B cell (primary cell): ENCODE measurements at regions of chrX and their contacts with region 1.

Region 1: DNA sequence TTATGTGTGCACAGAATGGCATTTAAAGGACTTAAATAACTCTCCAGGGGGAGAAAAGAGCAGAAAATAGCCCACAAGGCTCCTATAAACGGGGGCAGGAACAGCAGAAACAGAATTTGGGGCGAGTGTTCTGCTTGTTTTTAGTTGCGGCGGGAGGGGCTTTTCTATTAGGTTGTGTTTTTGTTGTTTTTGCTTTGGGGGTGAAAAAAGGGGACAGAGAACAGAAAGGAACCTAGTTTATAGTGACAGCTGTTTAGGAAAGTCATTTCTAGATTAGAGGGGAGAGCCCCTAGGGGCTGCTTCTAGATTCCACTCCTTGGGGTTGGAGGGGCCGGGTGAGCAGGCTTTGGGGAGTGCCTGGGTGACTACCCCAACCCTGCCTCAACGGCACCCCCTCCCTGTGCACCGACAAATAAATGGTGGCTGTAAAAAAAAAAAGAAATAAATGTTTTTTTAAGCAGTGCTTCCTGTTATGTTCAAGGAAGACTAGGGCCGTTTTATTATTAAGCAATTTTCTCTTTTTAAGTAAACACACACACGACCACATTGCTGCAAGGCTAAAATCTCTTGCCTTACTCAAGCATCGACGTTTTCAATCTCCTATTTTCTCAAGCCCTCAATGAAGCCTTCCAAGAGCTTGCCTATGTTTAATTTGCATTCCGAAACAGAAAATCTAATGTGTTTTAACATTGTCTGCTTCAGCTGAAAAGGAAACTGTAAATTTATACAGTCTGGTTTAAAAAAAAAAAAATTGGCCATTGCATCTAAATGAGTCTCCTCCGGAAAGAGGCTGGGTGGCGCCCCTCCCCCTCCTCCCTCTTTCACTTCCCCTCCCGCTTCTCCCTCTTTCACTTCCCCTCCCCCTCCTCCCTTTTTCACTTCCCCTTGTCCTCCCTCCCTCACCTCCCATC is 123.3 kb upstream of the TBL1X start:
- DNase-seq: peak; percentile 90
- ATAC-seq: peak; percentile 61
- H3K4me3 ChIP-seq: peak overlapping the region; percentile 30 to 71 (median 47)
- H3K4me3 Mint-ChIP-seq: peak overlapping the region; percentile 84
- H3K27ac ChIP-seq: peak overlapping the region; percentile 83 to 93
- H3K27ac Mint-ChIP-seq: peak overlapping the region; percentile 92
- H3K4me1 ChIP-seq: peaks cover 29 to 33% of the 10 kb centered on the region in 2 donors
- H3K4me1 Mint-ChIP-seq: peaks cover 30% of the 10 kb centered on the region
- H3K27me3 ChIP-seq: no peaks in the 10 kb centered on the region
- H3K27me3 Mint-ChIP-seq: no peaks in the 10 kb centered on the region
- CTCF ChIP-seq: no peak

Region 2: DNA sequence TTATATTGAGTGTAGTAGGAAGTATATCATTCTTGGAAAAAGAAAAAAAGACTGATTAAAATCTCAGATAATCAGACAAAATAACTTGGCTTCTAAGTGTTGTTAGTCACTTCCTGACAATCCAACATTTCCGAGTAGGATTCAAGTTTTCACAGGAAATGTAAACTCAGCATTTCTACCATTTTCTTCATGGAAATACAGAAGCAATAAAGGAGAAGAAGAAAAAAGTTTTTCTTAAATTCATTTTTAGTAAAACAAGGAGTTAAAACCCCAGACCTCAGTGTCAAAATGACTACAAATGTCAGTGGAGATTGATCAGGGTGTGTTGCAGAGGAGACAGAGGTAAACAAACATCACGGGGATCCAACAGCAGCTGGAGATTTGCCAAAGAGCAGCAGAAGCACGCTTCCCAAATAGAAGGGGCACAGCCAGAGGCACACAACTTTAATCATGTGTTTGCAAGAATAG is 178.3 kb before region 1 on chrX:
- CTCF ChIA-PET with region 1: interaction called, 3 read pairs
- POLR2A ChIA-PET with region 1: no interaction called
- intact Hi-C with region 1: loop called (anchors 1 kb)
- DNase-seq: no peak
- ATAC-seq: no peak
- H3K4me3 ChIP-seq: no peak overlapping the region
- H3K4me3 Mint-ChIP-seq: no peak overlapping the region
- H3K27ac ChIP-seq: no peak overlapping the region
- H3K27ac Mint-ChIP-seq: no peak overlapping the region
- H3K4me1 ChIP-seq: peaks cover 5 to 15% of the 10 kb centered on the region in 2 donors
- H3K4me1 Mint-ChIP-seq: peaks cover 26% of the 10 kb centered on the region
- H3K27me3 ChIP-seq: peaks cover 0 to 23% (median 9%) of the 10 kb centered on the region in 4 experiments
- H3K27me3 Mint-ChIP-seq: peaks cover 29% of the 10 kb centered on the region
- CTCF ChIP-seq: no peak

Region 3: GRCh38 chrX:9352694-9353411 is 11.3 kb after region 1 on chrX:
- CTCF ChIA-PET with region 1: interaction called, 3 read pairs
- POLR2A ChIA-PET with region 1: interaction called, 10 read pairs
- intact Hi-C with region 1: loop called (anchors 1 kb)
- DNase-seq: peak; percentile 46
- ATAC-seq: peak; percentile 57
- H3K4me3 ChIP-seq: peak overlapping the region in 4 of 5 experiments; percentile 30 to 55 (median 36)
- H3K4me3 Mint-ChIP-seq: peak overlapping the region; percentile 81
- H3K27ac ChIP-seq: peak overlapping the region; percentile 12 to 21
- H3K27ac Mint-ChIP-seq: peak overlapping the region; percentile 83
- H3K4me1 ChIP-seq: peaks cover 15 to 22% of the 10 kb centered on the region in 2 donors
- H3K4me1 Mint-ChIP-seq: peaks cover 24% of the 10 kb centered on the region
- H3K27me3 ChIP-seq: no peaks in the 10 kb centered on the region
- H3K27me3 Mint-ChIP-seq: no peaks in the 10 kb centered on the region
- CTCF ChIP-seq: no peak

Region 4: DNA sequence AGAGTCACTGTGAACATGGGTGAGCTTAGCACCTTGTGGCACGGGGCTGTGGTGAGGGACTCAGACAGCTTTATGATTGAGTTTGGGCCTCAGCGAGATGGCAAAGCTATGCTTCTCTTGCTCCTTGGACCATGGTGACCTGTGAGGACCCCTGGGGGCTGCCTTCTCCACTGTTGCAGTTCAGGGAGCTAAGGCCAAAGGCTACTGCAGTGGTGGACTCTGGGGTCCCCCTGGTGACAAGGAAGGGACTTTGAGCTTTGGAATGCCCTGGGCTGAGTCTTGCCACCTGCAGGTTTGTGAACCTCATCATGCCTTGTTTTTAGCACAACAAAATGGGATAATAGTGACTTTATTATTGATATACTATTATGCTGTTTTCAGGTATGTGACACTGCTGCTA is 159.8 kb after region 1 on chrX:
- CTCF ChIA-PET with region 1: no interaction called
- POLR2A ChIA-PET with region 1: no interaction called
- intact Hi-C with region 1: no loop called
- DNase-seq: peak; percentile 10
- ATAC-seq: no peak
- H3K4me3 ChIP-seq: no peak overlapping the region
- H3K4me3 Mint-ChIP-seq: no peak overlapping the region
- H3K27ac ChIP-seq: no peak overlapping the region
- H3K27ac Mint-ChIP-seq: no peak overlapping the region
- H3K4me1 ChIP-seq: no peaks in the 10 kb centered on the region
- H3K4me1 Mint-ChIP-seq: peaks cover 19% of the 10 kb centered on the region
- H3K27me3 ChIP-seq: no peaks in the 10 kb centered on the region
- H3K27me3 Mint-ChIP-seq: no peaks in the 10 kb centered on the region
- CTCF ChIP-seq: no peak

Region 5: DNA sequence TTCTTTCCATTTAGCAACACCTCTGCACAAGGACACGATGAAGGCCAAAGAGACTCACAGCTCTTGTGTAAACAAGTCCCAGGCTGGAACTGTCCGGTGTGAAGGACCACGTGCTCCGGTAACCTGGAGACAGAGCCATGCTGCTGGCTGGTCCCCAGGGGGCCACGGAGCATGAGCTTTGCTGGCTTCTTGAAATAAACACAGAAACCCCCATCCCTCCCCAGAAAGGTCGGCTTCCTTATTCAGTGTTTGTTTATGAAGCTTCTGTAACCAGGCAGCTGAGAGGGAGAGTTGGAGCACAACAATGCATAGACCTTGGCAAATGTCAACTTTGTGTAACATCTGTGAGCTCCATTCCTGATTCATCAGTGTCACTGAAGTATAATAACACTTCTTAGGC is 314.7 kb after region 1 on chrX:
- CTCF ChIA-PET with region 1: no interaction called
- POLR2A ChIA-PET with region 1: no interaction called
- intact Hi-C with region 1: loop called (anchors 5 kb)
- DNase-seq: peak; percentile 62
- ATAC-seq: peak; percentile 82
- H3K4me3 ChIP-seq: no peak overlapping the region
- H3K4me3 Mint-ChIP-seq: peak overlapping the region; percentile 54
- H3K27ac ChIP-seq: peak overlapping the region; percentile 41 to 64
- H3K27ac Mint-ChIP-seq: peak overlapping the region; percentile 91
- H3K4me1 ChIP-seq: peaks cover 0 to 19% of the 10 kb centered on the region in 2 donors
- H3K4me1 Mint-ChIP-seq: peaks cover 23% of the 10 kb centered on the region
- H3K27me3 ChIP-seq: no peaks in the 10 kb centered on the region
- H3K27me3 Mint-ChIP-seq: no peaks in the 10 kb centered on the region
- CTCF ChIP-seq: no peak